Gastrocnemius medialis (tissue), 4 donors: ENCODE measurements at regions of chr2 and their contacts with region 1.

Region 1: DNA sequence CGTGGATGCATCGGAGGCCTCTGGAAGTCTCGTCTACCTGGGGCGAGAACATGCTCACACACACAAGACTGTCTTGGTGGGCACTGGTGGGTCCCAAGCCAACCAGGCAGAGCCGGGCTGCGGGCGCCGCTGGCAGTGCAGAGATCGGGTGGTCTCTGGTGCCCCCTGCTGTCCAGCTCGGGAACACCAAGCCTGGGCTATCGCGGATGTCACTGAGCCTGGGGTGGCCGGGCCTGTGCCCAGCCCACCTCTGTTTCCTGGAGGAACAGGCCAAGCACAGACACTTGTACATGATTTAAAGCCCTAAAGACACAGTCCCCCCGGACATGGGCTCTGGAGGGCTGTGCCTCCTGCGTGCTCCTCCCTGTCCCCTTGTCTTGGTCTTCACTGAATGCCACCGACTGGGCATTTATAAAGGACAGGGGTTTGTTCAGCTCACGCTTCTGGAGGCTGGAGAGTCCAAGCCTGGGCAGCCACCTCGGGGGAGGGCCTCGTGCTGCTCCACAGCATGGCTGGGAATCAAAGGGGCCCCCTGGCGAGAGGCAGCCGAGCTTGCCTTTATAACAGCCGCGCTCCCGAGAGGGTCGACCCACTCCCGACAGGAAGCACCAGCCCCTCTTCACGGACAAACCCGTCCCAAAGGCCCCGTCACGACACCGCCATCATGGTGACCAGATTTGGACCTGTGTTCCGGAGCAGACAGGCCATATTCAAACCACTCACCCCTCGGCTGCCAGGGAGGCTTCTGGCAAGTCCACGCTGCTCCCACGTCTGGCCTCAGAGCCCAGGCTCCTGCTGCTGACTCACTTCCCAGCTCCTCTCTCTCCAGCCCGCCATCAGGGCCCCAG is 3.6 kb upstream of the OTOS start:
- DNase-seq: peak; percentile 24 to 50
- ATAC-seq: peak; percentile 77 to 90
- H3K4me3 ChIP-seq: no peak overlapping the region
- H3K27ac ChIP-seq: no peak overlapping the region
- H3K4me1 ChIP-seq: peaks cover 0 to 5% of the 10 kb centered on the region in 2 donors
- H3K27me3 ChIP-seq: no peaks in the 10 kb centered on the region
- CTCF ChIP-seq: peak; percentile 86 to 97 (median 96)
- POLR2A ChIP-seq: no peak

Region 2: DNA sequence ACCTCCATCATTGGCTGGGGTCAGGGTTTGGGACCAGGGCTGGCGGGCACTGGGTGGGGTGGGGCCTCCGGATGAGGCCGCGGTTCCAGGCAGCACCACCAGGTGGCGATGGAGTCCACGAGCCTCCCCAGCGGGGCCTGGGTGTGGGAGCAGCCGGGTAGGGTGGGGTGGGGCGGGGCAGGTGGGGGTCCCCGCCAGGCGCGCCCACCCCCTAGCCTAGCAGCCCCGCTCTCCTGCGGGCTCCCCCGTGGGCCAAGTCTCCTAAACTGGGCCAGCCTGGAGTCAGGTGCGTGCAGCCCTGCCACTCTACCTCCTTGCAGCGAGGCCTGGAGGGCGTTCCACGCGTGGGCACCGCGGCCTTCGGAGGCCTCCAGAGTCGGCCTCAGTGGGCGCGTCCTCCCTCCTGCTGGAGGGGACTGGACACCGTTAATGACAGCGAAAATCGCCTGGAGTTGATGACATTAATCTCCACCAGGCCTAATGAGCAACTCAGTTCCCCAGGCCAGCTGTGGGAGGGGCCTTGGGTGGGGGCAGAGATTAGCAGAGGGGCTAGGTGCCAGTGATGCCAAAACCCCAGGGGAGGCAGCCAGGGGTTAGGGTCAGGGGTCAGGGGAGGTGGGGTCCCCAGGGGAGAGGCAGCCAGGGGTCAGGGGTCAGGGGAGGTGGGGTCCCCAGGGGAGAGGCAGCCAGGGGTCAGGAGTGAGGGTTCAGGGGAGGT is 1108.5 kb before region 1 on chr2:
- in situ Hi-C with region 1: loop called in 1 of 4 experiments (anchors 25 kb)
- intact Hi-C with region 1: loop called (anchors 2 kb)
- DNase-seq: peak in 1 of 2 donors; percentile 42
- ATAC-seq: peak; percentile 75 to 76
- H3K4me3 ChIP-seq: no peak overlapping the region
- H3K27ac ChIP-seq: no peak overlapping the region
- H3K4me1 ChIP-seq: peaks cover 5 to 10% of the 10 kb centered on the region in 2 donors
- H3K27me3 ChIP-seq: peaks cover 0 to 10% (median 6%) of the 10 kb centered on the region in 3 donors
- CTCF ChIP-seq: peak; percentile 43 to 98 (median 83)
- POLR2A ChIP-seq: no peak

Region 3: GRCh38 chr2:239666855-239667376 is 477.1 kb before region 1 on chr2:
- in situ Hi-C with region 1: no loop called
- intact Hi-C with region 1: no loop called
- DNase-seq: no peak
- ATAC-seq: no peak
- H3K4me3 ChIP-seq: no peak overlapping the region
- H3K27ac ChIP-seq: no peak overlapping the region
- H3K4me1 ChIP-seq: no peaks in the 10 kb centered on the region
- H3K27me3 ChIP-seq: peaks cover 0 to 4% (median 0%) of the 10 kb centered on the region in 3 donors
- CTCF ChIP-seq: no peak
- POLR2A ChIP-seq: no peak

Region 4: GRCh38 chr2:239934571-239935171 is 209.4 kb before region 1 on chr2:
- in situ Hi-C with region 1: no loop called
- intact Hi-C with region 1: loop called (anchors 10 kb)
- DNase-seq: peak; percentile 35 to 71
- ATAC-seq: peak; percentile 69 to 89
- H3K4me3 ChIP-seq: no peak overlapping the region
- H3K27ac ChIP-seq: no peak overlapping the region
- H3K4me1 ChIP-seq: no peaks in the 10 kb centered on the region
- H3K27me3 ChIP-seq: no peaks in the 10 kb centered on the region
- CTCF ChIP-seq: peak; percentile 54 to 78 (median 71)
- POLR2A ChIP-seq: no peak

Region 5: DNA sequence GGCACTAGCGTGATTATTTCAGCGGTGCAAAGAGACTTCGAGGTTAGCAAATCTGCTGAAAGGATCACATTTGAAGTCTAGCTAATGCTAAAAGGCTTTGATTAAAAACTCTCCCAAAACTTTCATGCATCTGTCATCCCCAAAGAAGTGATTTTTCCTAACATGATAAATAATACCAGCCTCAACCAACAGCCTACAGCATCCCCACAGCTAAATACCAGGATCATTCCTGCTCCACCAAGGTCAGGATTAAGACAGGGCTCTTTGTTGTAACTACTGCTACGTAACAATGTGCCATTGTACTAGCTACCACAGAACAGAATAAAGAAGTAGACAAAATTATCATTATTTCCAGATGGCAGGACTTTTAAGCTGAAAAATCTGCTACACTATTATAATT is 92.3 kb before region 1 on chr2:
- in situ Hi-C with region 1: loop called in 1 of 4 experiments (anchors 10 kb)
- intact Hi-C with region 1: no loop called
- DNase-seq: no peak
- ATAC-seq: no peak
- H3K4me3 ChIP-seq: no peak overlapping the region
- H3K27ac ChIP-seq: no peak overlapping the region
- H3K4me1 ChIP-seq: no peaks in the 10 kb centered on the region
- H3K27me3 ChIP-seq: peaks cover 32 to 40% (median 39%) of the 10 kb centered on the region in 3 donors
- CTCF ChIP-seq: no peak
- POLR2A ChIP-seq: no peak

Region 6: GRCh38 chr2:240060977-240061591 is 82.9 kb before region 1 on chr2:
- in situ Hi-C with region 1: loop called (anchors 5 to 10 kb)
- intact Hi-C with region 1: loop called (anchors 1 kb)
- DNase-seq: no peak
- ATAC-seq: peak; percentile 50 to 53
- H3K4me3 ChIP-seq: no peak overlapping the region
- H3K27ac ChIP-seq: no peak overlapping the region
- H3K4me1 ChIP-seq: no peaks in the 10 kb centered on the region
- H3K27me3 ChIP-seq: peaks cover 0 to 2% (median 0%) of the 10 kb centered on the region in 3 donors
- CTCF ChIP-seq: peak; percentile 42 to 67 (median 56)
- POLR2A ChIP-seq: no peak

Region 7: GRCh38 chr2:240111251-240111650 is 32.8 kb before region 1 on chr2:
- in situ Hi-C with region 1: no loop called
- intact Hi-C with region 1: no loop called
- DNase-seq: no peak
- ATAC-seq: no peak
- H3K4me3 ChIP-seq: no peak overlapping the region
- H3K27ac ChIP-seq: no peak overlapping the region
- H3K4me1 ChIP-seq: no peaks in the 10 kb centered on the region
- H3K27me3 ChIP-seq: peaks cover 0 to 19% (median 4%) of the 10 kb centered on the region in 3 donors
- CTCF ChIP-seq: no peak
- POLR2A ChIP-seq: no peak